ENCODE measurements at regions of chr2 and their contacts with region 1.

Region 1: GRCh38 chr2:58240670-58241545 is at the start of gene FANCL:
- DNase-seq: peak; percentile 89 to 97
- ATAC-seq: peak; percentile 95
- H3K4me3 ChIP-seq: peak within 1 kb of the TSS; percentile 74 to 83
- H3K27ac ChIP-seq: peak within 1 kb of the TSS in 1 of 2 donors; percentile 58
- H3K4me1 ChIP-seq: no peaks in the 10 kb centered on the region
- H3K27me3 ChIP-seq: no peaks in the 10 kb centered on the region
- total RNA-seq, gene FANCL: 20.4 to 28.6 TPM

Region 2: DNA sequence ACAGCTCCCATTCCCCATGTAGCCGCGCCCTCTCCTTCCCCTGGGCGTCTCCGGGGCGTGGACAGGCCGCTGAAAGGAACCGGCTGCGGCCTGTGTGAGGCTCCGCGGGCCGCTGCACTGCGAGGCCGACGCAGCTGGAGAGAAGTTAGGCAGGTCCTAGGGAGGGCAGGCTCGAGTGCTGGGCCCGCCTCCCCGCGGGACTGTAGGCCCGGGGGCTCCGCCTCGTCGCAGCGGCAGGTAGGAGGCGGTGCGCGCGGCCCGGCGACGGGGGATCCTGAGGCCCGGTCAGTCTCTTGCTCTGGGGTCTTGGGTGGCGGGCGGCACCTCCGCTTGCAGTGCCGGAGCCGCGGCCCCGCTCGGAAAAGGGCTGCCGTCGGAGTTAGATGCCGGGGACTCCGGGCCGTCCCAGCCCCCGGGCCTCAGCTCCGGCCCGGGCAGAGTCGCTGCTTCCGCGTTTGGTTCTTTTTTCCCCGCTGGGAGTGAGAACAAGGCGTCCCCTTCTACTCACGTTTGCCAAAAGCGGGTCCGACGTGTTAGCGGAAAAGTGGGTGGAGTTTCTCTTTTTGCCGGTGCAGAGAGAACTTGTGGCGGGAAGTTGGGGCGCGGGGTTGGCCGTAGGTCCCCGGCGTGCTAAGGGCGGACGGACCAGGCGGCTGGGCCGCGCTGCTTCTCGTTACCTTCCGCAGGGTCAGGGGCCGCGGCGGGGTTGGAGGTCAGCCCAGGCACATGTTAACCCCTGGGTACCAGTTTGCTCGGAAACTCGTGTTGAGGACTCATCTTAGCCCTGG is 194.1 kb before region 1 on chr2 and contains the start of gene VRK2:
- intact Hi-C with region 1: loop called in 1 of 2 experiments (anchors 10 kb)
- DNase-seq: peak; percentile 94
- ATAC-seq: peak; percentile 98
- H3K4me3 ChIP-seq: peak within 1 kb of the TSS; percentile 65 to 88
- H3K27ac ChIP-seq: peak within 1 kb of the TSS; percentile 51 to 87
- H3K4me1 ChIP-seq: peaks cover 0 to 3% of the 10 kb centered on the region in 2 donors
- H3K27me3 ChIP-seq: no peaks in the 10 kb centered on the region
- total RNA-seq, gene VRK2: 21.9 to 22.3 TPM

Region 3: DNA sequence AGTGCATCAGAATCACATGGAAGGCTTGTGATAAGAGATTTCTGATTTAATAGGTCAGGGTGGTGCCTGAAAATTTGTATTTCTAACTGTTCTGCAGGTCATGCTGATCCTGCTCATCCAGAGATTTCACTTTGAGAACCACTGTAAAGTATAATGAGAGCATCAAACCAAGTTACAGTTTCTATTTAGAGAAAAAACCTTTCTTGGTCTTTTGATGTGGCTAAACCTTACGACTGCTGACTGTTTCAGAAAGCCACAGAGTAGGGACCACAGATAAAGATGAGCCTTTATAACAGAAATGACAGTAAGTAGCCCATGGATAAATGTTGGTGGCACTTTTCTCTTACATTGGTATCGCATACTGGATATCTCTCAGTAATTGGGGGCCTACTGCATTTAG is 109.6 kb after region 1 on chr2:
- intact Hi-C with region 1: no loop called
- DNase-seq: no peak
- ATAC-seq: no peak
- H3K4me3 ChIP-seq: no peak overlapping the region
- H3K27ac ChIP-seq: no peak overlapping the region
- H3K4me1 ChIP-seq: no peaks in the 10 kb centered on the region
- H3K27me3 ChIP-seq: no peaks in the 10 kb centered on the region